Thyroid gland (tissue), 4 donors: ENCODE measurements at regions of chr1 and their contacts with region 1.

Region 1: DNA sequence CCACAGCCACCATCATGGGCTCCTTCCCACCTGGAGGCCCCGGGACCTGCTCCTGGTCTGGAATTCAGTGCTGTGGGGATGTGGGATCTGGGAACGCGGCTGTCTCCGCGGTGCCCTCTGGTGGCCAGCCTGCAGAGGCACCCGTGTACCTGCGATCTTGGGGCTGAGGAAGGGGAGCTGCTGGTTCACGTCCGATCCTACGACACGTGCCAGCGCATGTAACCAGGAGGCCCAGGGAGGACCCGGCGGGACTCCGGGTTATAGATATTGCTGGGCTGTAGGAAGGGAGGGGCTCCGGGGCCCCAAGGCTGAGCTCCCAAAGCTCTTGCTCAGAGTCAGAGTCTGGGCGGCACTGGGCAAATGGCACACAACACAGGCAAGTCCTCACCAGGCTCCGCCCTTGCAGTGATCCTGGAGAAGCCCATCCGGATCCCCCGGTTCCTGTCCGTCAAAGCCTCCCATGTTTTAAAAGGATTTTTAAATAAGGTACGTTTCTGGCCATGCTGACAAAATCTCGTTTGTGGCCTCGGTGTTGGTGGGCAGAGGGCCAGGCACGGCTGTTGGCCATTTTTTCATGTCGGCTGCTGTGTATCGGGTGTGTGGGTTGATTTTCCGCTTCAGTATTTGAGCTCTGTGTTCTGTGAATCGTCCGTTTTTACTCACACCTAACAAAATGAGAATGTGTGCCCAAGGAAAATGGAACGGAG is 20.1 kb downstream of the FAAP20 start:
- DNase-seq: peak; percentile 33 to 42
- H3K4me3 ChIP-seq: no peak overlapping the region
- H3K27ac ChIP-seq: no peak overlapping the region
- H3K4me1 ChIP-seq: no peaks in the 10 kb centered on the region
- H3K27me3 ChIP-seq: no peaks in the 10 kb centered on the region
- CTCF ChIP-seq: peak; percentile 51 to 85 (median 58)
- POLR2A ChIP-seq: no peak

Region 2: DNA sequence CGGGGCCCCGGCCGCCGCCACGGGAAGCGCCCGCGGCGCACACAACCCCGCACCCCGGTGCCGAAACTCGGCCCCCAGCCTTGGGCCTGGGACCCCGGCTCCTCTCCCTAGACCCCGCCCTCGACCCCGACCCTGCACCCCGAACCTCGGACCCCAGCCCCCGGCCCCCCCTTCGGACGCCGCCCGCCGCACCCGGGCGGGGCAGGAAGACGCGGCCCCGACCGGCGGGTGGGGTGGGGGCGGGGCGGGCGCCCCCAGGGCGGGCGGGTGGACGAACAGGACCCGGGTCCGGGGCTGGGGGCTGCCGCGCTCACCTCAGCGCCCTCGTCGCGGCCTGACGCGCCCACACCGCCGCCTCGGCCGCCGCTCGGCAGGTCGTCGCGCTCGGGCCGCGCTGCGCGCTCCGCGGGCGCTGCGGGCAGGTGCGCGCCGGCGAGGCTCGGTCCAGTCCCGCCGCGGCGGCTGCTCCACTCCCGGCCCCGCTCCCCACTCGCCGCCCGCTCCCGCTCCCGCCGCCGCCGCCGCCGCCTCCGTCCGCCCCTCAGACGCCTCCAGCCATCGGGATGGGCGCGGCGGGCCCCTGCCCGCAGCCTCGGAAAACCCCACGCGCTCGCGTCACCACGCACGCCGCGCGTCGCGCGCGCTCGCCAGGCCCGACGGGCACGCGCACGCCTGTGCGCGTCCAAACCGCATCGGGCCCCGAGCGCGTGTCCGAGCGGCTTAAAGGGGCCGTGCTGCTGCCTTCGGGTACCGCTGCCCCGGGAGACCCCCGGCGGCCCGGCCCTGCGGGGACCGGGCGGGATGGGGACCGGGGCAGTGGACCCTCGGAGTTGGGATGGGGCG is 283.8 kb before region 1 on chr1 and contains the start of gene GNB1:
- intact Hi-C with region 1: no loop called
- DNase-seq: peak; percentile 85 to 86
- H3K4me3 ChIP-seq: peak within 1 kb of the TSS; percentile 75 to 86 (median 79)
- H3K27ac ChIP-seq: peak within 1 kb of the TSS; percentile 88 to 94 (median 90)
- H3K4me1 ChIP-seq: peaks cover 49 to 65% of the 10 kb centered on the region in 2 donors
- H3K27me3 ChIP-seq: no peaks in the 10 kb centered on the region
- CTCF ChIP-seq: no peak
- POLR2A ChIP-seq: peak; percentile 23 to 88
- total RNA-seq, gene GNB1: 154 to 200 (median 174) TPM

Region 3: DNA sequence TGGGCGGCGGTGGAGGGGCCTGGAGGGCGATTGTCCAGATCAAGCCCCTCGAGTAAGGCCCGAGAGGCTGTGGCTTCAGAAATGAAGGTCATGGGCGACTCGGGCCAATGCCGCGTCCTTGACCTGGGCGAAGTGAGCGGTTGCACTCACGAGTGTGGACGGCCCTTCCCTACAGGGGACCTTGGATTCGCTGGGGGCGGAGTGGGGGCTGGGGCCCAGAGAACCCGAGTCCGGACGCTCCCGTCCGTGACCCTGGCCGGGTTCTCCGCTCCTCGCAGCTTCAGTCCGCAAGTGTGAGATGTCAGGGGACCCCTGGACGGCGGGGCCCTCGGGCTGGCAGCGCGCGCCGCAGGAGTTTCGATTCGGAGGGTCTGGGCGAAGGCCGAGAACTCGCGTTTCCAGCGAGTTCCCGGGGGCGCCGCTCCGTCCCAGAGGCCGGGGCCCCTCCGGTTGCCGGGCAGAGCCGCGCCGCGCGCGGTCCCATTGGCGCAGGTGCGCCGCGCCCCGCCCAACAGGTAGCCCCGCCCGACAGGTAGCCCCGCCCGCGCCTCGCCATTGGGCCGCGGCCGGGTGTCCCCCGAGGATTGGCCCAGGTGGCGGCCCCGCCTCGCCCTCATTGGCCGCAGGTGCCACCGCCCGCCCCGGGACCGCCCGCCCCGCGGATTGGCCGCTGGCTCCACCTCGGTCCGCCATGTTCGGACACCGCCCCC is 124.6 kb before region 1 on chr1 and contains the start of gene PRKCZ:
- intact Hi-C with region 1: loop called (anchors 10 kb)
- DNase-seq: peak; percentile 97
- H3K4me3 ChIP-seq: peak within 1 kb of the TSS; percentile 18 to 84 (median 61)
- H3K27ac ChIP-seq: peak within 1 kb of the TSS; percentile 58 to 84 (median 82)
- H3K4me1 ChIP-seq: peaks cover 19 to 22% of the 10 kb centered on the region in 2 donors
- H3K27me3 ChIP-seq: no peaks in the 10 kb centered on the region
- CTCF ChIP-seq: no peak
- POLR2A ChIP-seq: peak in 1 of 2 donors; percentile 75
- total RNA-seq, gene PRKCZ: 33.6 to 53.0 (median 44.3) TPM

Region 4: GRCh38 chr1:2108213-2108876 is 66.2 kb before region 1 on chr1:
- intact Hi-C with region 1: no loop called
- DNase-seq: no peak
- H3K4me3 ChIP-seq: no peak overlapping the region
- H3K27ac ChIP-seq: no peak overlapping the region
- H3K4me1 ChIP-seq: peaks cover 9 to 15% of the 10 kb centered on the region in 2 donors
- H3K27me3 ChIP-seq: no peaks in the 10 kb centered on the region
- CTCF ChIP-seq: no peak
- POLR2A ChIP-seq: no peak

Region 5: GRCh38 chr1:2267051-2267830 is 92.7 kb after region 1 on chr1:
- intact Hi-C with region 1: no loop called
- DNase-seq: peak; percentile 54 to 55
- H3K4me3 ChIP-seq: no peak overlapping the region
- H3K27ac ChIP-seq: no peak overlapping the region
- H3K4me1 ChIP-seq: peaks cover 33 to 66% of the 10 kb centered on the region in 2 donors
- H3K27me3 ChIP-seq: no peaks in the 10 kb centered on the region
- CTCF ChIP-seq: no peak
- POLR2A ChIP-seq: no peak

Region 6: DNA sequence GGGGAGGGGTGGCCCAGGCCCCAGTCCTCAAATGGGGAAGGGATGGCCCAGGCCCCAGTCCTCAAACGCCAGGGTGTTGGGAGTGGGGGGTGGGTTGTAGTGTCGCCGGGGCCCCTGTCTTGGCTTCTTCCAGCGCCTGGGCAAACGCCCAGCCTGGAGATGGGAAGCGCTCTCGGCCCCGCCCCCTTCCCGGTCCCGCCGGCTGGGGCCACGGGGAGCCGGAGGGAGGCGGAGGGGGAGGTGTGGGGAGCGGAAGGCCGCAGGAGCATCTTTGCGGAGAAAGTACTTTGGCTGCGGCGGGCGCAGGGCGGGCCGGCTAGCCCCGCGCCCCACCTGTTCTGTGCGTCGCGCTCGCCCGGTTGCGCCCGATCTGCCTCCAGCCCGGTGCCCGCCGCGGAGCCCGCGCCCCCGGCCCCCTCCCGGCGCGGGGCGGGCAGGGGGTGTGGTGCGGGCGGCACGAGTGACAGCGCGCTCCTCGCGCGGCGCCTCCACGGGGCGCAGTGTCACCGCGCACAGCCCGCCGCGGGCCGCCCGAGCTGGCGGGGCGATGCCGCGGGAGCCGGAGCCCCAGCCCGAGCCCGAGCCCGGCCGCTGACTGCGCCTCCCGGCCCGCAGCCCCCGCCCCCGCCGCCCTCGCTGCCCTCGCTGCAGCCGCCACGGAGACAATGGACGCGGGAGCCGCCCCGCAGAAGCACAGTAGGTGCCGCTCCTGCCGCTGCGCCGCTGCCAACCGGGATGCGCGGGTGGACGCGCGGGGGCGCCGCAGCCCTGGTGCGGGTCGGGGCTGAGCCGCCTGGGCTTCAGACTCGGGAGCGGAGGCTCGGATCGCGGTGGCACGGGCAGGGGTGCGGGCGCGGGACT is 269.0 kb after region 1 on chr1:
- intact Hi-C with region 1: no loop called
- DNase-seq: no peak
- H3K4me3 ChIP-seq: no peak overlapping the region
- H3K27ac ChIP-seq: no peak overlapping the region
- H3K4me1 ChIP-seq: no peaks in the 10 kb centered on the region
- H3K27me3 ChIP-seq: peaks cover 5% of the 10 kb centered on the region
- CTCF ChIP-seq: no peak
- POLR2A ChIP-seq: no peak